Activated naive CD4-positive, alpha-beta T cell treated with anti-CD3 and anti-CD28 coated beads for 36 hours (primary cell): ENCODE measurements at regions of chr3 and their contacts with region 1.

Region 1: DNA sequence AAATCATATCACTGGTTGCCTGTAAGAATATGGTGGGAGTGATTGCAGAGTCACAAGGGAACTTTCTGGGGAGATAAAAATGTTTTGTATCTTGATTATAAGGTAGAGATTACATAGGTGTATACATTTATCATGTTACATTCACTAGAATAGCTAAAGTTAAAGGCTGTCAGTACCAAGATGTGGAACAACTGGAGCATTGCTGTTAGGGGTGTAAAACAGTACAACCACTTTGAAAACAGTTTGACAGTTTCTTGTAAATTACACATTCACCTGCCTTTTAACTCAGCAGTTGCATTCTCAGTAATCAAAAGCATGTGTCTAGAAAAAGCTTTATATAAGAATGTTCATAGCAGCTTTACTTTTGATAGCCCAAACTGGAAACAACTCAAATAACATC is 27.6 kb downstream of the RASA2 start:
- DNase-seq: no peak
- H3K4me3 Mint-ChIP-seq: no peak overlapping the region
- H3K27ac Mint-ChIP-seq: peak overlapping the region; percentile 6
- H3K4me1 Mint-ChIP-seq: peaks cover 56% of the 10 kb centered on the region
- H3K27me3 Mint-ChIP-seq: no peaks in the 10 kb centered on the region

Region 2: DNA sequence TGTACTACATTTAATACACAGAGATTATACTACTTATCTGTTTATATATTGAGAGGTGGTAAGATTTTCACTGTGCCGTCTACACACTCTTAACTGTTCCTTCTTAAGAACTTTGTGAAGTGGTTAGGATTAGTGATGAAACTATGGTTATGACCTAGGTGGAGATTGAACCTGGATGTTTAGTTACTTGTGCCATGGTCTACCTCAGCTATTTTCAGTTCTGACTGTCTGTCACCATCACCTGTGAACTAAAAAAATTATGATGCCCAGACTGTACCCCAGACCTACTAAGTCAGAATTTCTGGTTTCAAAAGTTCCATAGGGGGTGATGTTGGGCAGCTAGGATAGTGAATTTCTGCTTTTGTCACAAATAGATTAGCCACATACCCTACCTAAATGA is 21.2 kb before region 1 on chr3:
- CTCF ChIA-PET with region 1: interaction called, 5 read pairs
- intact Hi-C with region 1: loop called (anchors 1 kb)
- DNase-seq: no peak
- H3K4me3 Mint-ChIP-seq: no peak overlapping the region
- H3K27ac Mint-ChIP-seq: peak overlapping the region; percentile 27
- H3K4me1 Mint-ChIP-seq: peaks cover 90% of the 10 kb centered on the region
- H3K27me3 Mint-ChIP-seq: no peaks in the 10 kb centered on the region

Region 3: DNA sequence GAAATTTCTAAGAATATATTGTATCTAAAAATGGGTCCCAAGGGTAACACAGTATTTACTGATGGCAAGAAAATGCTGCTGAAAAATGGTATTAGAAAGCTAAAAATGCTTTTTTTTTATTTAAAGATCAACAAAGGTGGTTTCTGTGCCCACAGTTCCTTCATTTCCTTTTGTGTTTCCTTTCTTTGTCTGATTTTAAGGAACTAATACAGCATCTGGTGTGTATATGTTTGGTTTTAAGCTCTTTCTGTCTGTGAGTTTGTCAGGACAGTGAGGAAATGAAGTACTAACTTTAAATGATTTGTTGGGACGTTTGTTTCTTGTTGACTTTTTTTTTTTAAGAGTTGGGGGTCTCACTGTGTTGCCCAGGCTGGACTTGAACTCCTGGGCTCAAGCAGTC is 10.6 kb after region 1 on chr3:
- CTCF ChIA-PET with region 1: interaction called, 12 read pairs
- intact Hi-C with region 1: loop called (anchors 1 kb)
- DNase-seq: no peak
- H3K4me3 Mint-ChIP-seq: no peak overlapping the region
- H3K27ac Mint-ChIP-seq: no peak overlapping the region
- H3K4me1 Mint-ChIP-seq: peaks cover 79% of the 10 kb centered on the region
- H3K27me3 Mint-ChIP-seq: no peaks in the 10 kb centered on the region

Region 4: DNA sequence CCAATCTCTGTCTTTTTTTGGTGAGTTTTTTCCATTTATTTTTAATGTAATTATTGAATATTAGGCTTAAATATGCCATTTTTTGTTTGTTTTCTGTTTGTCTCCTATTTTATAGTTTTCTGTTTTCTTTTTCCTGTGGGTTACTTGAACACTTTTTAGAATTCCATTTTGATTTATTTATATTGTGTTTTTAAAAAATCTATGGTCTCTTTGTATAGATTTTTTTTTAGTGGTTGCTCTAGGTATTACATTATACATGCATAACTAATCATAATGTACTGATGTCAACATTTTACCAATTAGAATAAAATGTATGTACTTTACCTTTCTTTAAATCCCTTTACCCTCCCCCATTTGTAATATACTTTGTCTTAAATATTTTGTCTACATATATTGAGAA is 28.6 kb after region 1 on chr3:
- CTCF ChIA-PET with region 1: interaction called, 3 read pairs
- intact Hi-C with region 1: loop called (anchors 1 kb)
- DNase-seq: no peak
- H3K4me3 Mint-ChIP-seq: no peak overlapping the region
- H3K27ac Mint-ChIP-seq: no peak overlapping the region
- H3K4me1 Mint-ChIP-seq: peaks cover 66% of the 10 kb centered on the region
- H3K27me3 Mint-ChIP-seq: no peaks in the 10 kb centered on the region